Calu3 (cell line): ENCODE measurements at regions of chr4 and their contacts with region 1.

Region 1: GRCh38 chr4:181143250-181143854 is 1099.8 kb upstream of the TENM3 start:
- DNase-seq: peak; percentile 68
- H3K4me3 Mint-ChIP-seq: no peak overlapping the region
- H3K27ac Mint-ChIP-seq: no peak overlapping the region
- H3K4me1 Mint-ChIP-seq: no peaks in the 10 kb centered on the region
- H3K27me3 Mint-ChIP-seq: no peaks in the 10 kb centered on the region
- CTCF ChIP-seq: peak; percentile 50

Region 2: GRCh38 chr4:180828440-180829018 is 314.8 kb before region 1 on chr4:
- CTCF ChIA-PET with region 1: no interaction called
- intact Hi-C with region 1: loop called (anchors 5 kb)
- DNase-seq: peak; percentile 21
- H3K4me3 Mint-ChIP-seq: no peak overlapping the region
- H3K27ac Mint-ChIP-seq: no peak overlapping the region
- H3K4me1 Mint-ChIP-seq: no peaks in the 10 kb centered on the region
- H3K27me3 Mint-ChIP-seq: no peaks in the 10 kb centered on the region
- CTCF ChIP-seq: peak; percentile 41

Region 3: DNA sequence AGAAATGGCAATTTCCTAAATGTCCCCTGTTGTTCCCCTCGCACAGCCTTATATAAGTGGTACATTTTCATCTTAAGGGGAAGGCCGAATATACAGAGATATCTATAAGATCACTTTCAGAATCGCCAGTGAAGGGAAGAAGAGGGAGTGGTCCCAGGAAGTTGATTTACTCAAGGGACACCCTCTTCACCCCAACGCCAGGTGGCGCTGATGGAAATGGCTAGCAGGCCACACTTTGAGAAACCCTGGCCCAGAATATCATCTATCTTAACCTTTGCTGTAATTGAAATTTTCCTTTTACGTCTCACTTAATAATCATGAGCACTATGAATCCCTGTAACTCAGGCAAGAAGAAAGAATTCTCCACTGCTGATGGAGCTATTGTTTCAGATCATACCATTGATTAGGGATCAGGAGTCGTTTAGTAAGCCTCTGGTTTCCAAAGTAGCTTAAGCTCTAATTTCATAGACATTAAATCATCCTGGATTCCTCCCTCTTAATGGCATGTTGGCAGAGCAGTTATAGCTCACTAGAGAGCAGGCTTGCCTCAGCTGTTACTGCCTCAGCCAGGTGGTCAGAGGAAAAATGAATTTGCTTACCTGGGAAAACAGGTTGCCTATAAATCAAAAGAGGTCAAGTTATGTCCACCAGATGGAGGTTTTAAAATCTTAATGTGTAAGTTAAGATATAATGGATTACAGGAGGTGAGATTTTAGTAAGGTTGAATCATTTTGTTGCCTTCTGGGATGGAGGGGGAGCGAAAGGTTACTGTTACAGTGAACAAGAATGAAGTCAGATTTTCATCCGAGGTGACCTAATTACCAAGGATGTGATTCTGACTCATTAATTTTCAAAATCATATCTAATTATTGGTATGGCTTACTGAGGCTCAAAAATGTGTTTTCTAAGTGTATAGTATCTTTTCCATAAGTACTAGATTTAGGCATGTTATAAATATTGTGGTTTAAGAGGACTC is 158.7 kb after region 1 on chr4:
- CTCF ChIA-PET with region 1: no interaction called
- intact Hi-C with region 1: loop called (anchors 10 kb)
- DNase-seq: peak; percentile 69
- H3K4me3 Mint-ChIP-seq: peak overlapping the region; percentile 56
- H3K27ac Mint-ChIP-seq: no peak overlapping the region
- H3K4me1 Mint-ChIP-seq: peaks cover 7% of the 10 kb centered on the region
- H3K27me3 Mint-ChIP-seq: no peaks in the 10 kb centered on the region
- CTCF ChIP-seq: peak; percentile 43